ENCODE measurements at regions of chr1 and their contacts with region 1.

Region 1: DNA sequence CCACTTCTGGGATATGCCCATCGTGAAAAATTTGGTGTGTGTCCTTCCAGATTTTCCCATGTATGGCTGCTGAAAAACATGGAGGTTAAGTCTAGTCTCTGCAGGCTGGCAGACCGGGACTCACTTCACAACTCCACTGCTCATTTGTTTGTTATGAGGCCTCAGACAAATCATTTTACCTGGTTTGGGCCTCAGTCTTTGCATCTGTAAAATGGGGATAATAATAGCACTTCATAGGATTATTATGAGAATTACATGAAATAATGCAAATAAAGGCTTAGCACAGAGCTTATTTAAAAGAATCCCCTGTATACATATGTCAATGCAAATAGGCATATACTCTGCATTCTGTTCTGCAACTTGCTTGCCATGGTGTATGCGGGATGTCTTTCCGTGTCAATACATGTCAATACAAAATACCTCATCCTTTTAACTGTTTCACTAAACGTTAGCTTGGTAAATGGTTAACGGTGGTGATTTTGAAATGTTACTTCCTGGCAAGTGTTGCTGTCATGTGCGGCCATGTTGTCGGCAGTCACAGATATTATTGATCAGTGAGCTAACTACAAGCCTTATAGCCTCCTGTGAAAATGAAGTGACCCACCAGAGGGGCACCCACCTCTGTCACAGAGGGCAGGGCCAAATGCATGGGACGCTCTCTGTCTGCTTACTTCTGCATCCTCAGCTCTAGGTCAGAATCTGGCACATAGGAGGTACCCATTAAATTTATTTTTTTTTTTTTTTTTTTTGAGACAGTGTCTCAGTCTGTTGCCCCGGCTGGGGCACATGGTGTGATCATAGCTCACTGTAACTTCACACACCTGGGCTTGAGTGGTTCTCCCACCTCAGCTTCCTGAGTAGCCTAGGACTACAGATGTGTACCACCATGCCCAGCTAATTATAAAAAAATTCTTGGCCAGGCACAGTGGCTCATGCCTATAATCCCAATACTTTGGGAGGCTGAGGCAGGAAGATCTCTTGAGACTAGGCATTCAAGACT is 4.3 kb downstream of the LCK start:
- DNase-seq: peak; percentile 78
- H3K4me3 ChIP-seq: peak overlapping the region; percentile 69
- H3K27ac ChIP-seq: peak overlapping the region; percentile 99
- H3K4me1 ChIP-seq: peaks cover 87% of the 10 kb centered on the region
- CTCF ChIP-seq: no peak

Region 2: DNA sequence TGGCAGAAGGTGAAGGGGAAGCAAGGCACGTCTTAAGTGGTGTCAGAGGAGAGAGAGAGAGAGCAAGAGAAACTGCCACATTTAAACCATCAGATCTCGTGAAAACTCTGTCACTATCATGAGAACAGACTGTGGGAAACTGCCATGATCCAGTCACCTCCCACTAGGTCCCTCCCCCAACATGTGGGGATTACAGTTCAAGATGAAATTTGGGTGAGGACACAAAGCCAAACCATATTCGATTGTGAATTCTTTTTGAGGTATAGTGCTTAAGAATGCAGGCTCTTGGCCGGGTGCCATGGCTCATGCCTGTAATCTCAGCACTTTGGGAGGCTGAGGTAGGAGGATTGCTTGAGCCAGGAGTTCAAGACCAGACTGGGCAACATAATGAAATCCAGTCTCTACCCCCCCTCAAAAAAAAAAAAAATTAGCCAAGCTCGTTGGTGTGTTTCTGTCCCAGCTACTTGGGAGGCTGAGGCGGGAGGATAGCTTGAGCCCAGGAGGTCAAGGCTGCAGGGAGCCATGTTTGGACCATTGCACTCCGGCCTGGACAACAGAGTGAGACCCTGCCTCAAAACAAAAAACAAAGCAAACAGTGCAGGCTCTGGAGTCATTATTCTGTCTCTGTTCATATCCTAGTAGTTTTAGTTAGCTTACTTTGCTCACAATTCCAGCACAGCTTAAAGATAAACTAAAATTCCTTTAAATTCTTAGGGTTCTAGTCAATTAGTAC is 952.5 kb before region 1 on chr1:
- CTCF ChIA-PET with region 1: no interaction called
- POLR2A ChIA-PET with region 1: interaction called, 10 read pairs
- intact Hi-C with region 1: no loop called
- DNase-seq: no peak
- H3K4me3 ChIP-seq: no peak overlapping the region
- H3K27ac ChIP-seq: no peak overlapping the region
- H3K4me1 ChIP-seq: peaks cover 16% of the 10 kb centered on the region
- CTCF ChIP-seq: no peak

Region 3: GRCh38 chr1:32266921-32267591 is 11.7 kb after region 1 on chr1:
- CTCF ChIA-PET with region 1: interaction called, 6 read pairs
- POLR2A ChIA-PET with region 1: interaction called, 79 read pairs
- intact Hi-C with region 1: loop called (anchors 1 kb)
- DNase-seq: peak; percentile 60
- H3K4me3 ChIP-seq: peak overlapping the region; percentile 25
- H3K27ac ChIP-seq: peak overlapping the region; percentile 75
- H3K4me1 ChIP-seq: peaks cover 72% of the 10 kb centered on the region
- CTCF ChIP-seq: no peak

Region 4: GRCh38 chr1:32329931-32330466 is 74.6 kb after region 1 on chr1:
- CTCF ChIA-PET with region 1: no interaction called
- POLR2A ChIA-PET with region 1: no interaction called
- intact Hi-C with region 1: no loop called
- DNase-seq: no peak
- H3K4me3 ChIP-seq: no peak overlapping the region
- H3K27ac ChIP-seq: no peak overlapping the region
- H3K4me1 ChIP-seq: peaks cover 26% of the 10 kb centered on the region
- CTCF ChIP-seq: no peak

Measured in OCI-LY7 (cell line).